ENCODE measurements at regions of chr13 and their contacts with region 1.

Region 1: DNA sequence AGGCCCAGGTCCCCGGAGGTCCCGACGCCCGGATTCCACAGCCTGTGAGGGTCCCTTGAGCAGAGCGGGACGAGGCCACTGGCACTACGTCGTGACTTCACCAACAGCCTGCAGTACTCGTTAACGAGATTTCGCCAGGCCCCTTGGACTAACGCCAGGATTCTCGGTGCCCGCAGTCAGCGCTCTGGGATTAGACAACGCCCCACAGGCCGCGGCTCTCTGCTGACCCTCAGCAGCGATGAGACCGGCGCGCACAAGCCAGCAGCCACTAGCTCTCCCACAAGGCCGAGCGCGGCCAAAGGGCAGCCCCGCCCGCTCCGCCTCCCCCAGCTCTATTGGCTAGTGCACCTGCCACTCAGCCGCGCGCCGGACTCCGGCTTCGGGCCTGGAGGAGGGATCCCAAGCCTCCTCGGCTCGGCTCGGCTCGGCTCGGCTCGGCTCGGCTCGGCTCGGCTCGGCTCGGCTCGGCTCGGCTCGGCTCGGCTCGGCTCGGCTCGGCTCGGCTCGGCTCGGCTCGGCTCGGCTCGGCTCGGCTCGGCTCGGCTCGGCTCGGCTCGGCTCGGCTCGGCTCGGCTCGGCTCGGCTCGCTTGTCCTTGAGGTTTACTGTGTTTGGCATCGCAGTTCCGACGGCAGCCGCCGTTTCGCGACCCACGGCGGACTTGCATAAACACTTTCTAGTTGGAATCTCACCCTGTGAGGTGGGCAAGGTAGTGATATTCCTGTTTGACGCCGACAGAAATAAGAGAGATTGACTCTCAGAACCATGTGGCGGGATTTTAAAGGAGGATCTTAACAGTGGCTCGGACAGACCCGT is 231.7 kb upstream of the SERP2 start:
- DNase-seq: peak; percentile 91 to 99
- H3K4me3 ChIP-seq: peak overlapping the region; percentile 63
- H3K27ac ChIP-seq: peak overlapping the region; percentile 97
- H3K4me1 ChIP-seq: peaks cover 20% of the 10 kb centered on the region
- H3K27me3 ChIP-seq: no peaks in the 10 kb centered on the region
- CTCF ChIP-seq: no peak

Region 2: GRCh38 chr13:43905435-43906031 is 236.4 kb before region 1 on chr13:
- CTCF ChIA-PET with region 1: interaction called, 3 read pairs
- POLR2A ChIA-PET with region 1: no interaction called
- intact Hi-C with region 1: loop called (anchors 5 kb)
- DNase-seq: peak; percentile 9 to 62
- H3K4me3 ChIP-seq: no peak overlapping the region
- H3K27ac ChIP-seq: no peak overlapping the region
- H3K4me1 ChIP-seq: peaks cover 12% of the 10 kb centered on the region
- H3K27me3 ChIP-seq: no peaks in the 10 kb centered on the region
- CTCF ChIP-seq: peak; percentile 77

Region 3: DNA sequence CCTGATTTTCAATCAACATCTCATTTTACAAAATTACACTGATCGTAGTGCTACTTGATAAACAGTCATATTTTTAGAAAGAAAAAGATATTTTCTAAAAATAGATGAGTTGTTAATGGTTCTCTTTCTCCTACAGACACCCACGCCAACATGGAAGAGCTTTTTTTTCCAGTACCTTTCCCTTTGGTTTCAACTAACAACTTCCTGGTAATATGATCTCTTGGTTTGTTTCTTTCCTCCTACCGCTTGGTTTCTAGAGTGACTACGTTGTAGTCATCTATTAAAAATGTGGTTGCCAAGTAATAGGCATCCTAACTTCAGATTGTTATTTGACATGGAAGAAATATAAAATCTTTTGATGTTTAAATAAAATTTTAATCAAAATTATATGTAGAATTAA is 73.2 kb before region 1 on chr13:
- CTCF ChIA-PET with region 1: no interaction called
- POLR2A ChIA-PET with region 1: interaction called, 6 read pairs
- intact Hi-C with region 1: loop called (anchors 5 kb)
- DNase-seq: peak in 1 of 2 experiments; percentile 79
- H3K4me3 ChIP-seq: no peak overlapping the region
- H3K27ac ChIP-seq: peak overlapping the region; percentile 31
- H3K4me1 ChIP-seq: peaks cover 8% of the 10 kb centered on the region; the same call in 1 of the 2 replicates
- H3K27me3 ChIP-seq: no peaks in the 10 kb centered on the region
- CTCF ChIP-seq: no peak

Region 4: DNA sequence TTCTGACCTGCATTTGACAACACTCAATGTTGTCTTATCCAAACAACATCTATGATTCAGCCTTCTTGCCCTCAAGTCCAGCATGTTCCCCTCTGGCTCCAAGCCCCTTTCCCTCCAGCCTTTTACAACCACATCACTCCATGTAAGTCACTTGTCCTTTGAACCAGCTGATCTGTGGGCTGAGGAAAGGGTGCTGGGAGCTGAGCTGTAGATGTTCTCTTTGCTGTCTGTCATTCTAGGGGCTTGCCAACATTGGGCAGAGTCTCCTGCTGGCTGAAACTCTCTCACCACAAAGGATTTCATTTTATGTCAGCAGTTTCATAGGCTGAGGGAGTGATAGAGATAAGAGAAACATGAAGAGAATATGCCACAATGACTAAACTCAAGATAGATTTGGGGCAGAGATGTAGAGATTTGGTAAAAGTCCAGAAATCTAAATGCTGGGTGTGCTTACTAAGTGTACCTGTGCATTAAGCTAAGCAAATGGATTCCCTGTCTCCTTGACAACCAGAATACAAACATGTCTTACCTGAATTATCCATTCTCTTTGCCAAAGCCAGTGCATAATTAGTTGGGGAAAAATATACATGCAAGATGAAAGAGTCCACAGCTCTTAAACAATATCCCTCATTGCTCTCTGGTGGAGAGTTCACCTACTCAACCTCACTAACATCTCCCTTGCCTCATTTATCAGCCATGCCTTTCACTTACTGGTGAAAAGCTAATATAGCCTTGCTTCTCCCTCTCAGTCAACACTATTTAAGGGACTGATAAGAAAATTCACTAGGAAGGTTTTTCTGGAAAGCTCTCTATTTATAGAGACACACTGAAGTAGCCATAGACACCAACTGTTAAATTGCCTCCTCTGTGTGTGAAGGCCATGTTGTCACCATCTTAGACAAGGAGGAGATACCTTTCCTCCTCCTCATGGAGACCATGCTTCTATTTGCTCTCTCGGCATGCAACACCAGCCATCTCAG is 56.1 kb after region 1 on chr13:
- CTCF ChIA-PET with region 1: no interaction called
- POLR2A ChIA-PET with region 1: interaction called, 5 read pairs
- intact Hi-C with region 1: loop called (anchors 5 kb)
- DNase-seq: peak in 1 of 2 experiments; percentile 68
- H3K4me3 ChIP-seq: no peak overlapping the region
- H3K27ac ChIP-seq: peak overlapping the region; percentile 58
- H3K4me1 ChIP-seq: peaks cover 30% of the 10 kb centered on the region
- H3K27me3 ChIP-seq: no peaks in the 10 kb centered on the region
- CTCF ChIP-seq: no peak

Region 5: GRCh38 chr13:44267966-44268365 is 126.0 kb after region 1 on chr13:
- CTCF ChIA-PET with region 1: no interaction called
- POLR2A ChIA-PET with region 1: interaction called, 15 read pairs
- intact Hi-C with region 1: no loop called
- DNase-seq: peak; percentile 25 to 73
- H3K4me3 ChIP-seq: no peak overlapping the region
- H3K27ac ChIP-seq: peak overlapping the region; percentile 56
- H3K4me1 ChIP-seq: peaks cover 26% of the 10 kb centered on the region
- H3K27me3 ChIP-seq: no peaks in the 10 kb centered on the region
- CTCF ChIP-seq: no peak

Region 6: DNA sequence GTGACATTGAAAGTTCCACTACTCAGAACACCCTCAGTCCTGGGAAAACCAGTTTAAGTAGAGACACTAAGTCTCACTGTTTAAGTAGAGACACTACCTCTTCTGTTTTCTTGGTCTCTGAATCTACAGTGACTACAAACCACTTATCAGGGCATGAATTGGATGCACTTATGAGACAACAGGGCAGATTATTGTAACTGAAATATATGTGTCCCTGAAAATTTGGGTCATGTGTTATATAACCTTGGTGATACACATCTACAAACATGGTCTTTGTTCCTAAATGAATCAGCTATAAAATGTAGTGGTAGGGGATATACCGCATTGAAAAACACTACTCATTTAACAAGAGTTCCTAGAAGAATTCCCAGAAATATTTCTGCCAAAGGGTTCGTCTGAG is 287.4 kb after region 1 on chr13:
- CTCF ChIA-PET with region 1: no interaction called
- POLR2A ChIA-PET with region 1: no interaction called
- intact Hi-C with region 1: no loop called
- DNase-seq: no peak
- H3K4me3 ChIP-seq: no peak overlapping the region
- H3K27ac ChIP-seq: no peak overlapping the region
- H3K4me1 ChIP-seq: peaks cover 14% of the 10 kb centered on the region
- H3K27me3 ChIP-seq: no peaks in the 10 kb centered on the region
- CTCF ChIP-seq: no peak

Region 7: DNA sequence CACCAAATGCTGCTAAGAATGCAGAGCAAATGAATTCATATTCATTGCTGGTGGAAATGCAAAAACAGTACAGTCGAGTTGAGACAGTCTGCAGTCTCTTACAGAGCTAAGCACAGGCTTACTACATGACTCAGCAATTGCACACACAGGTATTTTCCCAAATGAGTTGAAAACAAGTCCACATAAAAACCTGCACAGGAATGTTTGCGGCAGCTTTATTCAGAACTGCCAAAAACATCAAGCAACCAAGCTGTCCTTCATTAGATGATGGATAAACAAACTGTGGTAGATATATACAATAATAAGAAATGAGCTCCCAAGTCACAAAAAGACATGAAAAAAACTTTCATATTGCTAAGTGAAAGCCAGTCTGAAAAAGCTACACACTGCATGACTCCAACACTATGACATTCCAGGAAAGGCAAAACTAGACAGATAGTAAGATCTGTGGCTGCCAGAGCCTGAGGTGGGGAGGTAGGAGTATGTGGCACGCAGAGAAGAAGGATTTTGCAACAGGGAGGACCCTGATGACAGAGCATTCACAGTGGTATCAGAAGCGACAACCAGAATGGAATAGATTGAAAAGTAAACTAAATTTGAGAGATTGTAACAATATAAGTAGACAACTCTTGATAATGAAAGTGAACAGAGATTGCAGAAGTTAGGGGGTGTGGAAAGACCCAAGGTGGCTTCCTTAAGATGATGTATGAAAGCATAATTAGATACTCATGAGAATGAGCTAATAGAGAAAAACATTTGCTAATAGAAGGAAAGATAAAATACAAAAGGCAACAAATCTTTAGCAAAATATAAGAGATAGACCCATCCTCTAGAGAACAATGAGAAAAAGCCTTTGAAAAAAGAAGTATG is 381.4 kb after region 1 on chr13:
- CTCF ChIA-PET with region 1: no interaction called
- POLR2A ChIA-PET with region 1: no interaction called
- intact Hi-C with region 1: no loop called
- DNase-seq: peak; percentile 21 to 80
- H3K4me3 ChIP-seq: peak overlapping the region; percentile 42; the same call in 1 of the 2 replicates
- H3K27ac ChIP-seq: peak overlapping the region; percentile 88
- H3K4me1 ChIP-seq: peaks cover 40% of the 10 kb centered on the region
- H3K27me3 ChIP-seq: no peaks in the 10 kb centered on the region
- CTCF ChIP-seq: no peak

Measured in PC-9 (cell line).